Transverse colon (tissue), 4 donors: ENCODE measurements at regions of chr9 and their contacts with region 1.

Region 1: GRCh38 chr9:113166039-113166438 is 15.2 kb downstream of the SLC31A2 start:
- DNase-seq: no peak
- H3K4me3 ChIP-seq: no peak overlapping the region
- H3K27ac ChIP-seq: no peak overlapping the region
- H3K4me1 ChIP-seq: no peaks in the 10 kb centered on the region
- H3K27me3 ChIP-seq: no peaks in the 10 kb centered on the region
- CTCF ChIP-seq: no peak
- EP300 ChIP-seq: no peak
- POLR2A ChIP-seq: no peak

Region 2: GRCh38 chr9:113184539-113184938 is 18.5 kb after region 1 on chr9:
- in situ Hi-C with region 1: no loop called
- intact Hi-C with region 1: loop called (anchors 1 kb)
- DNase-seq: no peak
- H3K4me3 ChIP-seq: no peak overlapping the region
- H3K27ac ChIP-seq: no peak overlapping the region
- H3K4me1 ChIP-seq: no peaks in the 10 kb centered on the region
- H3K27me3 ChIP-seq: no peaks in the 10 kb centered on the region
- CTCF ChIP-seq: no peak
- EP300 ChIP-seq: no peak
- POLR2A ChIP-seq: no peak

Region 3: GRCh38 chr9:113289091-113289490 is 123.1 kb after region 1 on chr9:
- in situ Hi-C with region 1: no loop called
- intact Hi-C with region 1: no loop called
- DNase-seq: peak; percentile 69
- H3K4me3 ChIP-seq: no peak overlapping the region
- H3K27ac ChIP-seq: peak overlapping the region; percentile 23 to 37 (median 30)
- H3K4me1 ChIP-seq: peaks cover 0 to 13% (median 6%) of the 10 kb centered on the region in 4 donors
- H3K27me3 ChIP-seq: no peaks in the 10 kb centered on the region
- CTCF ChIP-seq: no peak
- EP300 ChIP-seq: no peak
- POLR2A ChIP-seq: no peak